A549 (cell line): ENCODE measurements at regions of chr1 and their contacts with region 1.

Region 1: DNA sequence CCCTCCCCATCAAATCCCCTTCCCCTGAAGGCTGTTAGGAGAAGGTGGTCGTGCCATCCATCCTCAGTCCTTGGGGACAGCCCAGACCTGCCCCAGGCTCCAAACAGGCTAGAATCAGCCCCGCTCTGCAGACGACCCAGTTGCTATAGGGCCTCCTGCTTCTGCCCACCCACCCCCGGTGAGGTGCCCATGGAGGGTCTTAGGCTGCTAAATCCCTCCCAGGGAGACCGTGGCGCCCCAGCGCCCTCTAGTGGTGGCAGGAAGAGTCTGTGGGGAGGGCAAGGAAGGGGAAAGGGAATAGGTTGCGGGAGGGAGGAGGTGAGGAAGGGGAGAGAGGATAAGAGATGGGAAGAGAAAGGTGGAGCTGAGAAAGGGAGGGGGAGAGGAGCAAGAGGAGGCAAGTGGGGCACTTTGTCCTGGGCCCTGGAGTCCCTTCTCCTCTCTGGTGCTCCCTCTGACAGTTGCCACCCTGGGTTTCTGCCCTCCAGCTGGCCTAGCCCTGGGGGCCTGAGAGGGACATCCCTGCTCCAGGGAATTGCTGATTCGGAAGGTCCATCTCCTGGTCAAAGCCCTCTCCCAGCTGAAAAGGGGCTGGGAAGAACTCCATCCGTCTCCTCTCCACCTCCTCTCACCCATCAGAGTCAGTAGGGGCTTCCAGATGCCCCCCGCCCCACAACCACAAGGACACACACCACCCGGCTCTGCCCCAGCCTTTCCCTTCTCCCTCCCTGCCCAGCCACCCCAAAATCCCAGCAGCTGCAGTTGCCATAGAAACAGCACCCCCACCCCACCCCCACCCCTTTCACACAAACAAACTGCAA is 55.4 kb downstream of the CAMK2N1 start:
- DNase-seq: peak; percentile 23 to 39
- ATAC-seq: peak; percentile 55 to 87; a peak in 3 of 6 replicates
- H3K4me3 ChIP-seq: no peak overlapping the region
- H3K27ac ChIP-seq: peak overlapping the region; percentile 35 to 61; a peak in 3 of 6 replicates
- H3K4me1 ChIP-seq: peaks cover 11% of the 10 kb centered on the region
- CTCF ChIP-seq: peak; percentile 64
- EP300 ChIP-seq: no peak
- POLR2A ChIP-seq: no peak
- RAD21 ChIP-seq: peak; percentile 80 to 83

Region 2: DNA sequence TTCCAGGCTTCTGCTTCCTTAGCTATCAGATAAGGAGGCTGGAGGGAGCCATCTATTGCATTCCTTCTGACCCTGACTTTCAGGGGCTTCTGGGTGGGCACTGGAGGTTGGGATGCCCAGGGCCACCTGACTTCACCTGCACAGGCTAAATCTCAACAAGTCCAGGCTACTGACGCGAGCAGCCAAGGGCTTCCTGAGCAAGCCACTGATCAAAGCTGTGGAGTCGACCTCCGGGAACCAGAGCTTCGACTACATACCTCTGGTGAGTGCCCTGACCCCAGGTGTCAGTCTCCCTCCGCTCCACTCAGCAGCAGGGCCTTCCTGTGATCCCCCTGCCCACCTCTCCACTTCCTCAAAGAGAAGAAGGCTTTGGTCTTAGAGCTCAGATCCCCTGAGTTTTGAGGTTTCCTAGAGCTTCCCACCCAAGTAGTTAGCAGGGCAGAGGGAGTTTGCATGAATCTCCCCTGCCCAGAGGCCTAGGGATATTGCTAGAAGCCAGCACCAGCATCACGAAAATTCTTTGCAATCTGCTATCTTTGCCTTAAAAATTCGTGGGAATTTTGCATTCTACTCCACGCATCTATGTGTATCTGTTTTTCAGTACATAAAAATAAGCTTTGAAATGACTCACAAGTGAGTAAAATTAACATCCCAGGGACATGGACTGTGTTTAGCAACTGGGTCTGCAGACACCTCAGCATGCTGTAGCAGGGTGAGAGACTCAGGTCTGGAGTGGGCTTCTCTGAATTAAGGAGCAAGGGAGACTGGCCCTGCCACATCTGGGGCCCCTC is 78.5 kb before region 1 on chr1:
- CTCF ChIA-PET with region 1: no interaction called
- POLR2A ChIA-PET with region 1: no interaction called
- DNase-seq: no peak
- ATAC-seq: no peak
- H3K4me3 ChIP-seq: no peak overlapping the region
- H3K27ac ChIP-seq: no peak overlapping the region
- H3K4me1 ChIP-seq: no peaks in the 10 kb centered on the region
- CTCF ChIP-seq: no peak
- EP300 ChIP-seq: no peak
- POLR2A ChIP-seq: no peak
- RAD21 ChIP-seq: no peak

Region 3: GRCh38 chr1:20376880-20377494 is 53.6 kb before region 1 on chr1:
- CTCF ChIA-PET with region 1: interaction called, 22 read pairs
- POLR2A ChIA-PET with region 1: interaction called, 3 read pairs
- DNase-seq: peak; percentile 34 to 59
- ATAC-seq: peak; percentile 65 to 92; a peak in 5 of 6 replicates
- H3K4me3 ChIP-seq: no peak overlapping the region
- H3K27ac ChIP-seq: peak overlapping the region in 1 of 2 experiments; percentile 43; a peak in 2 of 6 replicates
- H3K4me1 ChIP-seq: peaks cover 33% of the 10 kb centered on the region
- CTCF ChIP-seq: peak; percentile 48
- EP300 ChIP-seq: no peak
- POLR2A ChIP-seq: no peak
- RAD21 ChIP-seq: peak; percentile 42 to 61; a peak in 4 of 5 replicates

Region 4: DNA sequence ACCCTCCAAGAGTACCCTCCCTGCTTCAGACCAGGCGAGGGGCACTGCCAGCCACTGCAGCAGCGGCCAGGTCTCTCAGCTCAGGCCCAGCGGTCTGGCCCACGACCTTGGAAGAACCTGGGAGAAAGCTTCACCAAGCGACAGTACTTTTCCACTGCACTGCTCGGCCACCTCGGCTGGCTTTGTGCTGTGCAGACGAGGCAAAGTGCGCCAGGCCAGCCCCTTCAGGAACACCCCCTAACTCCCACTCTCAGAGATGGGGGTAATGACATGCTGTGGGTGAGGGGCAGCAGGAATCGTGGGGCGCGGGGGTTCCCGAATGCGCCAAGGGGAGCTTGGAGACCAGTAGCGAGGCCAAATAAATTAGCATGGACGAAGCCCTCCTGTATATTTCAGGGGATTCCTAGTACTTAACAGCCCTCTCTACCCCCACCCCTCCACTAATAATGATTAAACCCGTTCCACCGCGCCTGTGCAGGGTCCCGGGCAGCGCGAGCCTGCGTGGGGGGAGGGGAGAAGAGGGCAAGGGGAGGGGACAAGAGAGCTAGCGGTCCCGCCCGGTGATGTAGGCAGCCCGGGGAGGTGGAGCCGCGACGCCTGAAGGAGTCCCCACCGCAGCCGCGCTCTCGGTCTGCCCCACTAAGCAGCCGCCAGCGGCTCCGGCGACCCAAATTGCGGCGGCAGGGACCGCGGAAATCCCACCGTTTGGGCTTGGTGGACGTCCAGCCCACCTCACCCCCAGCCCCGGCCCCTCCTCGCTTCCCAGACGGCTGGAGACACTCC is 121.6 kb after region 1 on chr1 and contains the start of gene FAM43B:
- CTCF ChIA-PET with region 1: no interaction called
- POLR2A ChIA-PET with region 1: no interaction called
- DNase-seq: peak; percentile 62 to 77
- ATAC-seq: peak; percentile 87 to 95
- H3K4me3 ChIP-seq: peak within 1 kb of the TSS; percentile 67
- H3K27ac ChIP-seq: peak within 1 kb of the TSS; percentile 77 to 92
- H3K4me1 ChIP-seq: peaks cover 8% of the 10 kb centered on the region
- CTCF ChIP-seq: no peak
- EP300 ChIP-seq: no peak
- POLR2A ChIP-seq: peak; percentile 60
- RAD21 ChIP-seq: no peak
- polyA plus RNA-seq, gene FAM43B: 0.53 and 0.76 TPM in 2 replicates

Region 5: GRCh38 chr1:20640183-20640597 is 209.6 kb after region 1 on chr1:
- CTCF ChIA-PET with region 1: no interaction called
- POLR2A ChIA-PET with region 1: no interaction called
- DNase-seq: peak; percentile 45 to 54
- ATAC-seq: peak; percentile 83 to 85; a peak in 5 of 6 replicates
- H3K4me3 ChIP-seq: no peak overlapping the region
- H3K27ac ChIP-seq: no peak overlapping the region
- H3K4me1 ChIP-seq: peaks cover 3% of the 10 kb centered on the region; the same call in 1 of the 3 replicates
- CTCF ChIP-seq: peak; percentile 83
- EP300 ChIP-seq: no peak
- POLR2A ChIP-seq: no peak
- RAD21 ChIP-seq: peak; percentile 86 to 88